Activated CD4-positive, alpha-beta T cell treated with anti-CD3 and anti-CD28 coated beads for 36 hours (primary cell): ENCODE measurements at regions of chr2 and their contacts with region 1.

Region 1: DNA sequence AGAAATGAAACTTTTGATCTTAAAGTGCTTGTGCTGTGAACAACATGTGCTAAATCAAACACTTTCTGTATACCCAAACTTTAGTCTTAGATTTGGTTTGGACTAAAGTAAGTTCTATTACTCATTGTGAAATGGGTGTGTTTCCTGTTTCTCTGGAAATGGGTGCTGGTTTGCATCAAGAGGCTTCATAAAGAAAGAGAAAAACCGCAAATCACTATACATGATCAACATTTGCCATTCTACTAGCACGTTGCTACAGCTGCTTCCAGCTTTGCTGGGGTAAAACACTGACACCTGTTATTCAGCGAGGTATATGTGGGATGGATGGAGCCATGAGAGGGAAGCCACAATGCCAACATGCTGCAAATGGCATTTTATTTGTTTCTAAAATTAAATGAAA is 547.0 kb upstream of the ACVR2A start:
- DNase-seq: peak; percentile 41
- ATAC-seq: peak; percentile 75
- H3K4me3 Mint-ChIP-seq: no peak overlapping the region
- H3K27ac Mint-ChIP-seq: peak overlapping the region; percentile 86
- H3K4me1 Mint-ChIP-seq: peaks cover 68% of the 10 kb centered on the region
- H3K27me3 Mint-ChIP-seq: peaks cover 2% of the 10 kb centered on the region

Region 2: DNA sequence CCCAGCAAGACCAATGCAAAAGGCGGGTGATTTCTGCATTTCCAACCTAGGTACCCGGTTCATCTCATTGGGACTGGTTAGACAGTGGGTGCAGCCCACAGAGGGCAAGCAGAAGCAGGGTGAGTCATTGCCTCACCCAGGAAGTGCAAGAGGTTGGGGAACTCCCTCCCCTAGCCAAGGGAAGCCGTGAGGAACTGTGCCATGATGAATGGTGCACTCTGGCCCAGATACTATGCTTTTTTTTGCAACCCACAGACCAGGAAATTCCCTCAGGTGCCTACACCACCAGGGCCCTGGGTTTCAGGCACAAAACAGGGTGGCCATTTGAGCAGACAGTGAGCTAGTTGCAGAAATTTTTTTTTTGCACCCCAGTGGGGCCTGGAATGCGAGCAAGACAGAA is 115.6 kb before region 1 on chr2:
- CTCF ChIA-PET with region 1: interaction called, 3 read pairs
- POLR2A ChIA-PET with region 1: no interaction called
- intact Hi-C with region 1: loop called in 1 of 2 experiments (anchors 1 kb)
- DNase-seq: peak; percentile 72
- ATAC-seq: peak; percentile 88
- H3K4me3 Mint-ChIP-seq: no peak overlapping the region
- H3K27ac Mint-ChIP-seq: peak overlapping the region; percentile 43
- H3K4me1 Mint-ChIP-seq: peaks cover 20% of the 10 kb centered on the region
- H3K27me3 Mint-ChIP-seq: peaks cover 9% of the 10 kb centered on the region

Region 3: GRCh38 chr2:147331790-147332419 is 34.1 kb after region 1 on chr2:
- CTCF ChIA-PET with region 1: interaction called, 4 read pairs
- POLR2A ChIA-PET with region 1: interaction called, 3 read pairs
- intact Hi-C with region 1: loop called (anchors 1 kb)
- DNase-seq: peak; percentile 67
- ATAC-seq: peak; percentile 61
- H3K4me3 Mint-ChIP-seq: no peak overlapping the region
- H3K27ac Mint-ChIP-seq: no peak overlapping the region
- H3K4me1 Mint-ChIP-seq: peaks cover 12% of the 10 kb centered on the region
- H3K27me3 Mint-ChIP-seq: no peaks in the 10 kb centered on the region

Region 4: GRCh38 chr2:147623328-147623727 is 325.5 kb after region 1 on chr2:
- CTCF ChIA-PET with region 1: no interaction called
- POLR2A ChIA-PET with region 1: no interaction called
- intact Hi-C with region 1: loop called (anchors 2 to 10 kb)
- DNase-seq: peak; percentile 23
- ATAC-seq: peak; percentile 99
- H3K4me3 Mint-ChIP-seq: peak overlapping the region; percentile 41
- H3K27ac Mint-ChIP-seq: peak overlapping the region; percentile 81
- H3K4me1 Mint-ChIP-seq: peaks cover 34% of the 10 kb centered on the region
- H3K27me3 Mint-ChIP-seq: no peaks in the 10 kb centered on the region

Region 5: GRCh38 chr2:147628971-147629421 is 331.2 kb after region 1 on chr2:
- CTCF ChIA-PET with region 1: no interaction called
- POLR2A ChIA-PET with region 1: no interaction called
- intact Hi-C with region 1: loop called (anchors 2 to 10 kb)
- DNase-seq: no peak
- ATAC-seq: peak; percentile 43
- H3K4me3 Mint-ChIP-seq: no peak overlapping the region
- H3K27ac Mint-ChIP-seq: peak overlapping the region; percentile 59
- H3K4me1 Mint-ChIP-seq: peaks cover 57% of the 10 kb centered on the region
- H3K27me3 Mint-ChIP-seq: no peaks in the 10 kb centered on the region

Region 6: DNA sequence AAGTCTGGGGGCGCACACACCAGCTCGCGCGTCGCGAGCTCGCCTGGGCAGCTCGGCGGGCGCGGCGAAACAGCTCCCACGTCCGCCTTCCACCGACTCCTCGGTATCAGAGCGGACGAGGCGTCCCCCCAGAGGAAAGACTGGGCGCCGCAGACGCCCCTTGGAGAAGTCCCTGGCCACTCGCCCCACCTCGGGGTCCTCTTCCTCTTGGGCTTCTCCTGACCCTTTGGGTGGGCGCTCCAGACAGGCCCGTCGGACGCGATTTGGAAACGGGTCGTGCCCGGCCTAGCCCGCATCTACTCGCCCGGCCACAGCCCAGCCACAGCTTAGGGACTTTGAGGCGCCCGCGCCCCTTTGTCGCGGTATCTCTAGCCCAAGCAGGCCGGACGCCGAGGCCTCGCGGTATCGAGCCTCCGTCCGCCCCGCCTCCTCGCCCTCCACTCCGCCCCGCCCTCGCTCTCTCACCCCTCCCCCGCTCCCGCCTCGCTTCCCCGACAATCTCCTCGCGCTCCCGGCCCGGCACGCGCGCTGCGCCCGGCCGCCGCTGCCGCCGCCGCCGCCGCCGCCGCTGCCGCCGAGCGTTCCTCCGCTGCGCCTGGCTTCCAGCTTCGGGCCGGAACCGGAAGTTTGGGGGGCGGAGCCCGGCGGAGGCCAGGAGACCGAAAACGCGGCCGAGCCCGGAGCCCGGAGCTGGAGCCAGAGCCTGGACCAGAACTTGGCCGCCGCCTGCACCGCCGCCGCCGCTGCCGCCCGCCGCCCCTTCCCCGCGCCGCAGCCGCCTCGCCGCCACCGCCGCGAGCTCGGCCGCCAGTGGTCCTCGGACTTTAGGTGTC is 546.3 kb after region 1 on chr2:
- CTCF ChIA-PET with region 1: no interaction called
- POLR2A ChIA-PET with region 1: no interaction called
- intact Hi-C with region 1: loop called (anchors 2 to 5 kb)
- DNase-seq: peak; percentile 93
- ATAC-seq: peak; percentile 82
- H3K4me3 Mint-ChIP-seq: peak overlapping the region; percentile 82
- H3K27ac Mint-ChIP-seq: peak overlapping the region; percentile 77
- H3K4me1 Mint-ChIP-seq: peaks cover 34% of the 10 kb centered on the region
- H3K27me3 Mint-ChIP-seq: peaks cover 14% of the 10 kb centered on the region

Region 7: DNA sequence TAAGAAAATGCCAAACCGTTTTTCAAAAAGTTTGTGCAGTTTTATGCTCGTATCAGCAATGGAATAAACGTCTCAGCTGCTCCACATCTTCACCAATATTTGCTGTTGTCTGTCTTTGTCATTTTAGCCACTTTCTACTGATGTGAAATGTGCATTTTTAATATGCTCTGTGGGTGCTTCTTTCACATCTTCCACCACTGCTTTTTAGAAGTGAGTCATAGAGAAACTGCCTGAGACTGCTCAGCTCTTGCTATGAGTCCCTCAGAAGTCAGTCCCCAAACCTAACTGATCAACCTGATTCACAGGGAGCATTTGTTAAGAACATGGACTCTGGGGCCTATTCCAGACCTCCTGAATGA is 1305.7 kb after region 1 on chr2:
- CTCF ChIA-PET with region 1: no interaction called
- POLR2A ChIA-PET with region 1: no interaction called
- intact Hi-C with region 1: loop called in 1 of 2 experiments (anchors 5 kb)
- DNase-seq: peak; percentile 49
- ATAC-seq: peak; percentile 92
- H3K4me3 Mint-ChIP-seq: no peak overlapping the region
- H3K27ac Mint-ChIP-seq: peak overlapping the region; percentile 88
- H3K4me1 Mint-ChIP-seq: peaks cover 18% of the 10 kb centered on the region
- H3K27me3 Mint-ChIP-seq: peaks cover 17% of the 10 kb centered on the region

Region 8: DNA sequence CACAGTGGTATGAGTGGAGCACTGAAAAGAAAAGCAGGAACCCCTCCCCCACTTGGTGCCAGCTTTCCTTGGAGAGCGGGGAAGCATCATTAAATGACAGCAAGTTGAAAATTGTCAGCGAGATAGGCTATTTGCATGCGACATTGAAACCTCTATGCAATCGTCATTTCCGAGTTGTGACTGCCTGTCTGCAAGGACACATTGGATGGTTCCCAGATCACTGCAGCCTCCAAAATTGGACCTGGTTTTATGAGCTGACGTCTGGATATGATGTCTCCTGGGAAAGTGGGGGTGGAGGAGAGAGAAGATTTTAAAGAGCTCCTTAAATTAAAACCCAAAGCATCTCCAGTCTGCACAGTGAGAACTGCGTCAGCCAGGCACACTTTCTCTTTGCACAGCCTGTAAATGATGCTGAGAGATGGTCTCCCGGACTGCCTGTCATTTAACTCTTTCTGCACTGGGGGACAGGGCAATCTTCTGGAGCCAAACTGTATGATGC is 1519.4 kb after region 1 on chr2:
- CTCF ChIA-PET with region 1: no interaction called
- POLR2A ChIA-PET with region 1: no interaction called
- intact Hi-C with region 1: no loop called
- DNase-seq: no peak
- ATAC-seq: no peak
- H3K4me3 Mint-ChIP-seq: no peak overlapping the region
- H3K27ac Mint-ChIP-seq: no peak overlapping the region
- H3K4me1 Mint-ChIP-seq: peaks cover 22% of the 10 kb centered on the region
- H3K27me3 Mint-ChIP-seq: peaks cover 11% of the 10 kb centered on the region